ENCODE measurements at regions of chr7 and their contacts with region 1.

Region 1: DNA sequence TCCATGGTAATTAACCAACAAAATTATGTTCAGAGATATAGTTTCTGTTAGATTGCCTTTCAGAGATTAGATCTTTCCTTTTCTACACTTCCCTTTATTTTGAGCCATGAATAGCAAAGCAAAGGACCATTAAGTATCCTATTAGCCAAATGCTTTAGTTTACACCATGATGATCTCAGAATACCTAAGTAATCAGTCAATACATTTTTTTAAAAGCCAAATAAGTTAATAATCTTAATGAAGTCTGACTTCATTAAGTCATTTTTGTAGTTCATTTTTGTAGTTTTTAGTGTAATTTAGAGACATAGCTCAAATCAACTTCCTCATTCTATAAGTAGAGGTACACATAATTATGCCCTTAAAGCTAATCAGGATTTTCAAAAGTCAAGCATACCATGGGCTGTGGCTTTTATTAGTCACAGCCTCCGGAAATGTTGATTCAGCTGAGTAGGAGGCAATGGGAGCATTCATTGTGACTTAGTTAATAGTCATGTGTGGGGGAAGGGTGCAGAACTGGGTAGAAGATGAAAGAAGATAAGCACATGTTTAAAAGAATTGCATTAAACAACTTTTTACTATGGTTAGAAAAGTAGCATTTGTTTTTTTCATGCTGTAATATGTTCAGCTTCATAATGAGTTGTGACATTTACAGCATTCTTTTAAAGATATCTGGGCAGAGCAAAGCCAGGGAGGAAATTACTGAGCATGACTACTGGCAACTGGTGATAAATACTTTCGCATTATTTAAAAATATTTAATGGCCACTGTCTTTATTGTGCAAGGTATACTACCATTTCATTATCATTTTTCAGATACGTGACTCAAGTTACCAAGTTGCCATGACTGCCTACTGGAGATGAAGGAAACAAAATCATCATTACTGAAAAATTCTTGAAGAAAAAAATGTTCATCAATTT is 57.3 kb upstream of the CCDC71L start:
- DNase-seq: peak; percentile 98
- H3K4me3 ChIP-seq: peak overlapping the region in 1 of 3 experiments; percentile 26
- H3K27ac ChIP-seq: peak overlapping the region; percentile 99
- H3K4me1 ChIP-seq: peaks cover 28% of the 10 kb centered on the region
- H3K27me3 ChIP-seq: no peaks in the 10 kb centered on the region
- CTCF ChIP-seq: no peak
- POLR2A ChIP-seq: peak; percentile 45

Region 2: GRCh38 chr7:106588422-106589198 is 129.6 kb before region 1 on chr7:
- CTCF ChIA-PET with region 1: no interaction called
- POLR2A ChIA-PET with region 1: no interaction called
- dilution Hi-C with region 1: no loop called
- intact Hi-C with region 1: loop called (anchors 1 kb)
- DNase-seq: no peak
- H3K4me3 ChIP-seq: no peak overlapping the region
- H3K27ac ChIP-seq: peak overlapping the region; percentile 89
- H3K4me1 ChIP-seq: peaks cover 30% of the 10 kb centered on the region
- H3K27me3 ChIP-seq: no peaks in the 10 kb centered on the region
- CTCF ChIP-seq: no peak
- POLR2A ChIP-seq: no peak

Region 3: GRCh38 chr7:106609416-106609815 is 108.8 kb before region 1 on chr7:
- CTCF ChIA-PET with region 1: no interaction called
- POLR2A ChIA-PET with region 1: no interaction called
- dilution Hi-C with region 1: no loop called
- intact Hi-C with region 1: loop called (anchors 1 kb)
- DNase-seq: peak; percentile 88
- H3K4me3 ChIP-seq: no peak overlapping the region
- H3K27ac ChIP-seq: peak overlapping the region; percentile 88
- H3K4me1 ChIP-seq: peaks cover 20% of the 10 kb centered on the region
- H3K27me3 ChIP-seq: no peaks in the 10 kb centered on the region
- CTCF ChIP-seq: no peak
- POLR2A ChIP-seq: no peak

Region 4: GRCh38 chr7:106679153-106679931 is 38.9 kb before region 1 on chr7:
- CTCF ChIA-PET with region 1: interaction called, 3 read pairs
- POLR2A ChIA-PET with region 1: no interaction called
- dilution Hi-C with region 1: no loop called
- intact Hi-C with region 1: loop called (anchors 1 kb)
- DNase-seq: peak; percentile 73
- H3K4me3 ChIP-seq: no peak overlapping the region
- H3K27ac ChIP-seq: peak overlapping the region; percentile 47
- H3K4me1 ChIP-seq: peaks cover 22% of the 10 kb centered on the region
- H3K27me3 ChIP-seq: no peaks in the 10 kb centered on the region
- CTCF ChIP-seq: no peak
- POLR2A ChIP-seq: no peak

Region 5: GRCh38 chr7:106731187-106731586 is 13.0 kb after region 1 on chr7:
- CTCF ChIA-PET with region 1: interaction called, 37 read pairs
- POLR2A ChIA-PET with region 1: interaction called, 5 read pairs
- dilution Hi-C with region 1: no loop called
- intact Hi-C with region 1: loop called (anchors 1 kb)
- DNase-seq: peak; percentile 96
- H3K4me3 ChIP-seq: peak overlapping the region in 1 of 3 experiments; percentile 0
- H3K27ac ChIP-seq: peak overlapping the region; percentile 44
- H3K4me1 ChIP-seq: peaks cover 27% of the 10 kb centered on the region
- H3K27me3 ChIP-seq: no peaks in the 10 kb centered on the region
- CTCF ChIP-seq: no peak
- POLR2A ChIP-seq: no peak

Region 6: DNA sequence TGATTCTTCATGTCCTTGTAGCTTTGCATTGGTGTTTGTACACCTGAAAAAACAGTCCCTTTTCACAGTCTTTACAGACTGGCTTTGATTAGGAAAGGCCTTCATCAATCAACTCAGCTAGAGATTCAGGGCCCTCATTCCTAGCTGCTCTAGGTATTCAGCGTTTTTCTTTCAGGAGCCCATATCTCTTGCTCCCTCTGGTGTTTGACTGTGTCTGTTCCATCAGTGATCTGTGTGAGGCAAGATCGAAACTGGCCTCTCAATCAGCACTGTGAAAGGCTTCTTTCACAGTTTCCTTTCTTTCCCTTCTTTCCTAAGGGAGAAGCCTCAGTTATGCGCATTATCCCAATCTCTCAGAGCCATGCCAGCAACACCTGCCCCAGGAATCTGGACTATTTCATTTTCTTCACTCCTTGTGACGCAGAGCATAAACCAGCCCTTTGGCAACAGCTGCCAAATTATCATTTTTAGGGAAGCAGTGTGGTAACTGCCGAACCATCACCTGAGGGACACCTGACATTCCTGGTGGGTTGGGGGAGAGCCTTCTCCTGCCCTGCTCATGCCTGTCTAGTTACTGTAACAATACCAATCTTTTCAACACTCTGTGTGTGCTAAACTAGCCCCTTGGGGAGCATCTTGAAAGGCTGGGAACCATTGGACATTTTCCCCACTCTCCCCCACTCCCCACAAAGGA is 18.4 kb after region 1 on chr7:
- CTCF ChIA-PET with region 1: interaction called, 37 read pairs
- POLR2A ChIA-PET with region 1: interaction called, 5 read pairs
- dilution Hi-C with region 1: no loop called
- intact Hi-C with region 1: loop called (anchors 1 kb)
- DNase-seq: peak; percentile 84
- H3K4me3 ChIP-seq: no peak overlapping the region
- H3K27ac ChIP-seq: peak overlapping the region; percentile 37
- H3K4me1 ChIP-seq: peaks cover 18% of the 10 kb centered on the region
- H3K27me3 ChIP-seq: no peaks in the 10 kb centered on the region
- CTCF ChIP-seq: peak; percentile 65 to 74
- POLR2A ChIP-seq: no peak

Region 7: GRCh38 chr7:106779877-106780276 is 61.7 kb after region 1 on chr7:
- CTCF ChIA-PET with region 1: interaction called, 3 read pairs
- POLR2A ChIA-PET with region 1: interaction called, 4 read pairs
- dilution Hi-C with region 1: no loop called
- intact Hi-C with region 1: loop called (anchors 1 kb)
- DNase-seq: no peak
- H3K4me3 ChIP-seq: no peak overlapping the region
- H3K27ac ChIP-seq: no peak overlapping the region
- H3K4me1 ChIP-seq: peaks cover 16% of the 10 kb centered on the region
- H3K27me3 ChIP-seq: no peaks in the 10 kb centered on the region
- CTCF ChIP-seq: no peak
- POLR2A ChIP-seq: no peak